OCI-LY7 (cell line): ENCODE measurements at regions of chr6 and their contacts with region 1.

Region 1: GRCh38 chr6:110101885-110102284 is 77.6 kb downstream of the WASF1 start:
- DNase-seq: peak; percentile 86
- H3K4me3 ChIP-seq: peak overlapping the region; percentile 22
- H3K27ac ChIP-seq: peak overlapping the region; percentile 63
- H3K4me1 ChIP-seq: peaks cover 26% of the 10 kb centered on the region
- CTCF ChIP-seq: no peak

Region 2: GRCh38 chr6:110083875-110084585 is 17.9 kb before region 1 on chr6:
- CTCF ChIA-PET with region 1: no interaction called
- POLR2A ChIA-PET with region 1: interaction called, 20 read pairs
- intact Hi-C with region 1: no loop called
- DNase-seq: no peak
- H3K4me3 ChIP-seq: no peak overlapping the region
- H3K27ac ChIP-seq: no peak overlapping the region
- H3K4me1 ChIP-seq: peaks cover 36% of the 10 kb centered on the region
- CTCF ChIP-seq: no peak